ENCODE measurements at regions of chr1 and their contacts with region 1.

Region 1: GRCh38 chr1:162035241-162035640 is 11.6 kb upstream of the OLFML2B start:
- DNase-seq: no peak
- H3K4me3 ChIP-seq: no peak overlapping the region
- H3K27ac ChIP-seq: no peak overlapping the region
- H3K27me3 ChIP-seq: peaks cover 26% of the 10 kb centered on the region
- CTCF ChIP-seq: no peak

Region 2: DNA sequence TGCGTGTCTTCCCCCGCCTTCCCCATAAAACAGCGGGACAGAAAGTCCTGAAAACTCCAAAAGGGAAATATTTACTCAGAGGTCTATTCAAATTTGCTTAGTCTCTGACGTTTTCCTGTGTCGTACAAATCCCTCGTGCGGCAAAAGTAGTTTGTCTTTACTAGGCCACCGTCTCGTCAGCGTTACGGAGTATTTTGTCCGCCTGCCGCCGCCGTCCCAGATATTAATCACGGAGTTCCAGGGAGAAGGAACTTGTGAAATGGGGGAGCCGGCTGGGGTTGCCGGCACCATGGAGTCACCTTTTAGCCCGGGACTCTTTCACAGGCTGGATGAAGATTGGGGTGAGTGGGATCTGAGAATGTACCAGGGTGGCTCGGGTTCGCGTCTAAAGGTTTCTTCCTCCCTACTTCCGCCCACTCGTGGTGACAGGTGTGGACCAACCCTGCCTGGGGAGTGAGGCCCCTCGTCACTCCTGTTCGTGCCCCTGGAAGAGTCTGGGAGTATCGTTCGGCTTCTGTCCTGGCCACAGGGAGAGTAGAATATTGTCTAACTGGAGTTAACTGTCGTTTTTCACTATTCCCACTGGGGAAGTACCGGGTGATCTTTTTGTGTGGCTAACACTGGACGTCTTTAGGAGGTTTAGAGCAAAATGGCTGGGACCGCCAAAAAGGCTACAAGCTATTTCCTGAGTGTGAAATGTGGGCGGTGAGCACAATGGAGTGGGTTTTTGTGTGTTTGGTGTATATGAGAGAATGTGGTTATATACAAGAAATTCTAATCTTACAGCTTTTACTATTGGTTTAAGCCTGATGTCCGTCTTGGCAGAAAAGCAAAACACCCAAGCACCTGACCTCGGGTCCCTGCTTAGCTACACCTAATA is 268.9 kb before region 1 on chr1 and contains the start of gene ATF6:
- CTCF ChIA-PET with region 1: interaction called, 27 read pairs
- POLR2A ChIA-PET with region 1: no interaction called
- DNase-seq: peak; percentile 71
- H3K4me3 ChIP-seq: peak within 1 kb of the TSS; percentile 95
- H3K27ac ChIP-seq: peak within 1 kb of the TSS; percentile 62
- H3K27me3 ChIP-seq: no peaks in the 10 kb centered on the region
- CTCF ChIP-seq: 0 out of 2 replicates have a peak, but pooled peaks have one; percentile 6
- polyA plus RNA-seq, gene ATF6: 27.2 and 33.6 TPM in 2 replicates

Region 3: GRCh38 chr1:161801955-161802354 is 233.3 kb before region 1 on chr1:
- CTCF ChIA-PET with region 1: interaction called, 771 read pairs
- POLR2A ChIA-PET with region 1: no interaction called
- DNase-seq: no peak
- H3K4me3 ChIP-seq: no peak overlapping the region
- H3K27ac ChIP-seq: no peak overlapping the region
- H3K27me3 ChIP-seq: no peaks in the 10 kb centered on the region
- CTCF ChIP-seq: no peak

Region 4: DNA sequence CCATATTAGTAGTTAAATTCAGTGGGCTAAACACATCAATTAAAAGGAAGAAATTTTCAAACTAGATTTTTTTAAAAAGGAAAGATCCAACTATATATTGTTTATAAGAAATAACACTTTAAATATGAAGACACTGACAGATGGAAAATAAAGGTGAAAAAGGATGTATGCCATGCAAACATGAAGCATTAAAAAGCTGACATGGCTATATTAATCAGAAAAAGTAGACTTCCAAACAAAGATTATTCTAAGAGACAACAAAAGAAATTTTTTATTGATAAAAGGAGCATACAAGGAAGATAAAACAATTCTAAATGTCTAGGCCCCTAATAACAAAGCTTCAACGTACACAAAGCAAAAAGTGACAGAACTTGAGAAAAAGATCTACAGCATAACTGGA is 177.0 kb before region 1 on chr1:
- CTCF ChIA-PET with region 1: interaction called, 45 read pairs
- POLR2A ChIA-PET with region 1: no interaction called
- DNase-seq: no peak
- H3K4me3 ChIP-seq: no peak overlapping the region
- H3K27ac ChIP-seq: no peak overlapping the region
- H3K27me3 ChIP-seq: no peaks in the 10 kb centered on the region
- CTCF ChIP-seq: no peak

Region 5: GRCh38 chr1:161952607-161953172 is 82.6 kb before region 1 on chr1:
- CTCF ChIA-PET with region 1: interaction called, 12 read pairs
- POLR2A ChIA-PET with region 1: no interaction called
- DNase-seq: no peak
- H3K4me3 ChIP-seq: no peak overlapping the region
- H3K27ac ChIP-seq: no peak overlapping the region
- H3K27me3 ChIP-seq: no peaks in the 10 kb centered on the region
- CTCF ChIP-seq: no peak

Region 6: GRCh38 chr1:162056043-162056442 is 20.8 kb after region 1 on chr1:
- CTCF ChIA-PET with region 1: interaction called, 18 read pairs
- POLR2A ChIA-PET with region 1: no interaction called
- DNase-seq: peak; percentile 23
- H3K4me3 ChIP-seq: no peak overlapping the region
- H3K27ac ChIP-seq: no peak overlapping the region
- H3K27me3 ChIP-seq: peaks cover 15% of the 10 kb centered on the region
- CTCF ChIP-seq: peak; percentile 98